ENCODE measurements at regions of chr12 and their contacts with region 1.

Region 1: GRCh38 chr12:2583091-2583497 is 211.7 kb upstream of the FKBP4 start:
- DNase-seq: peak; percentile 48
- H3K4me3 ChIP-seq: no peak overlapping the region
- H3K27ac ChIP-seq: no peak overlapping the region
- H3K4me1 ChIP-seq: no peaks in the 10 kb centered on the region
- CTCF ChIP-seq: peak; percentile 72

Region 2: DNA sequence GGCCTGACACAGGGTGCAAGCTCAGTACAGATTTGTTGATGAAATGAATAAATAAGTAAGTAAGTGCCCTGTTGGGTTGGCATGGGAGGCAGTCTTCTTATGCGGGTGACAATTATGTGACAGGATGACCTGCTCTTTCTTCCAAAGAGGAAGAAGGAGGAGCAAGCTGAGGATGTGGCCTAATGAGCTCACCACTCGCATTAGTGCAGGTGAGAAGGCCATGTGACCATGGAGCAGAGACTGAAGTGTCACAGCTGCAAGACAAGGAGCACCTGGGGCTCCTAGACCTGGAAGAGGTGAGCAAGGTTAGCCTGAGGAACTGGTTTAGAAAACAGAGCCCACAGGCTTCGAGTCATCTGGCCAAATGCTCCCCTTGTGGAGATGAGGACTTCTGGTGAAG is 727.9 kb before region 1 on chr12:
- CTCF ChIA-PET with region 1: no interaction called
- POLR2A ChIA-PET with region 1: no interaction called
- intact Hi-C with region 1: no loop called
- DNase-seq: no peak
- H3K4me3 ChIP-seq: no peak overlapping the region
- H3K27ac ChIP-seq: no peak overlapping the region
- H3K4me1 ChIP-seq: no peaks in the 10 kb centered on the region
- CTCF ChIP-seq: no peak

Region 3: DNA sequence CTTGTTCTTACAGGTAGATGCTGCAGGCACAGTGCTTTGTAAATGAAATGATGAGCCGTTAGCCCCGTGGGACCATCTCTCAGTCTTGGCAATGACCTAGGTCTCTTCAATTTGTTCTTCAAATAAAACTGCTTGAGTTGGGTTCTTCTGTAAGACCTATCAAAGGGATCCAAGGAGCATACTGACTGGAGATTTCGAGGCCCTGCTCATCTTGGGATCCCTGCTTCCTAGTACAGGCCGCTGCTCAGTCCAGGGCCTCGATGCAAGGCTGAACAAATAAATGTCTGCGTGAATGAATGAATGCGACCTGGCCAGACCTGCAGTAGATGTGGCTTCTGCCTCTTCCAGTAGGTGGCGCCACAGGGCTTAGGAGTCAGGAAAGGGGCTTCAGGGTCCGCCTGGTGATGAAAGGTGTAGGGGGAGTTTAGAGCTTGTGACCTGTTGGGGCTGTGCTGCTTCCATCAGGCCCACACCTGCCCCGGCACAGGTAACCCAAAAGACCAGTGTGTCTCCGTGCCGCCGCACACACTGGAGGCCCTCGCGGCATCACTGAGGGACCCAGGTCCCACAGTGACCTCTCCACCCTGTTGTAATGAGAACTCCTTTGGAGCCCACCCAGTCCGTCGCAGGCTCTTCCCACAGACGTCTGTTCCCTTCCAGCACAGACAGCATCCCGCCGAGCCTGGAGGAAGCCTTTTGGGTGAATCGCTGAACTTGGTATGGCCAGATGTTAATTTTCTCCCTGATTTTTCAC is 525.9 kb before region 1 on chr12:
- CTCF ChIA-PET with region 1: no interaction called
- POLR2A ChIA-PET with region 1: no interaction called
- intact Hi-C with region 1: loop called (anchors 2 kb)
- DNase-seq: peak; percentile 78
- H3K4me3 ChIP-seq: no peak overlapping the region
- H3K27ac ChIP-seq: no peak overlapping the region
- H3K4me1 ChIP-seq: no peaks in the 10 kb centered on the region
- CTCF ChIP-seq: peak; percentile 93

Region 4: GRCh38 chr12:2291182-2291832 is 291.8 kb before region 1 on chr12:
- CTCF ChIA-PET with region 1: no interaction called
- POLR2A ChIA-PET with region 1: no interaction called
- intact Hi-C with region 1: loop called (anchors 5 kb)
- DNase-seq: peak; percentile 78
- H3K4me3 ChIP-seq: no peak overlapping the region
- H3K27ac ChIP-seq: no peak overlapping the region
- H3K4me1 ChIP-seq: peaks cover 31% of the 10 kb centered on the region
- CTCF ChIP-seq: peak; percentile 92

Region 5: GRCh38 chr12:2382370-2383155 is 200.5 kb before region 1 on chr12:
- CTCF ChIA-PET with region 1: no interaction called
- POLR2A ChIA-PET with region 1: no interaction called
- intact Hi-C with region 1: loop called (anchors 5 kb)
- DNase-seq: peak; percentile 14
- H3K4me3 ChIP-seq: no peak overlapping the region
- H3K27ac ChIP-seq: no peak overlapping the region
- H3K4me1 ChIP-seq: no peaks in the 10 kb centered on the region
- CTCF ChIP-seq: peak; percentile 45

Region 6: GRCh38 chr12:2451025-2451424 is 132.1 kb before region 1 on chr12:
- CTCF ChIA-PET with region 1: no interaction called
- POLR2A ChIA-PET with region 1: no interaction called
- intact Hi-C with region 1: no loop called
- DNase-seq: no peak
- H3K4me3 ChIP-seq: no peak overlapping the region
- H3K27ac ChIP-seq: no peak overlapping the region
- H3K4me1 ChIP-seq: peaks cover 3% of the 10 kb centered on the region
- CTCF ChIP-seq: no peak

Region 7: GRCh38 chr12:2596441-2596840 is 13.3 kb after region 1 on chr12:
- CTCF ChIA-PET with region 1: no interaction called
- POLR2A ChIA-PET with region 1: no interaction called
- intact Hi-C with region 1: no loop called
- DNase-seq: no peak
- H3K4me3 ChIP-seq: no peak overlapping the region
- H3K27ac ChIP-seq: no peak overlapping the region
- H3K4me1 ChIP-seq: no peaks in the 10 kb centered on the region
- CTCF ChIP-seq: no peak

Measured in OCI-LY7 (cell line).